ENCODE measurements at regions of chr12 and their contacts with region 1.

Region 1: DNA sequence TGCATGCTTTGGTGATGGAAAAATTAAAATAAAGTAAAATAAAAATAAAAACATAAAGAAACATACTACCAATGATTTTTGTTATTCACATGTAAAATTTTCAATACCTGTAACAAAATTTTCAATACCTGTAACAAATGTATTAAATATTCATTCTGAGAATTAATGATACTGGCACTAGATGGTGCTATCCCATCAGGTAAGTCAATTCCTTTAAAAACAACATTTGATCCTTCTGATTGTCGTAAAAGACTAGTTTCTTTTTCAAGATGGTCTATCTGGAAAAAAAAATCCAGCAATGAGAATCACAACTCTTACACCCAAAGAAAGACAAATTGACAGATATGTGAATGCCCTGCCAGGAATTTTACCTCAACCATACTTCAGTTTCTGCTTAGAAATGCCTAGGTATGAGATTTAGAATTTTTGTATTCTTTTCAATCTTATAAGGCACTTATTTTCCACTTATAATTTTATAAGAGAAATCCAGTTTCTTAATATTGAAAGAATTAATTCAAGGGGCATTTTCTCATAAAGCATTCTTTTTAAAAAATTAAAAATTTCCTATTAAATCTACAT is 30.7 kb downstream of the CEP290 start:
- DNase-seq: peak in 2 of 4 experiments; percentile 12 to 25
- ATAC-seq: no peak
- H3K4me3 ChIP-seq: no peak overlapping the region
- H3K27ac ChIP-seq: no peak overlapping the region
- H3K4me1 ChIP-seq: no peaks in the 10 kb centered on the region
- H3K27me3 ChIP-seq: no peaks in the 10 kb centered on the region
- CTCF ChIP-seq: peak in 2 of 3 experiments; percentile 17 to 57; a peak in 2 of 6 replicates
- EP300 ChIP-seq: no peak
- POLR2A ChIP-seq: no peak
- RAD21 ChIP-seq: peak; percentile 58 to 63

Region 2: DNA sequence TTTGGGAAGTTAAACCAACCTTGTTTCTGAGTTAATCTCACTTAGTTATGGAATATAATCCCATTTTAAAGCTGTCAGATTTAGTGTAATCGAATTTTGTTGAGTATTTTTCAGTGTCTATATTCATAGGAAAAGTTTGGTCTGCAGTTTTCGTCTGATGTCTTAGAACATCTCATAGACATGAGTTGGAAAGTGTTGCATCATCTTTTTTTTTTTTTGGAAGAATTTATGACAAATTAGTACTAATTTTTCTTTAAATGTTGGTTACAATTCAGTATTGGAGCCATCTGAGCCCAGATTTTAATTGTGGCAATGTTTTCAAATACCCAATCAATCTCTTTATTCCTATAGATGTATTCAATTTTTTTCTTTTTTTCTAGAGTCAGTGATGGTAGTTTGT is 109.8 kb before region 1 on chr12:
- CTCF ChIA-PET with region 1: no interaction called
- POLR2A ChIA-PET with region 1: no interaction called
- in situ Hi-C with region 1: no loop called
- intact Hi-C with region 1: no loop called
- DNase-seq: no peak
- ATAC-seq: no peak
- H3K4me3 ChIP-seq: no peak overlapping the region
- H3K27ac ChIP-seq: no peak overlapping the region
- H3K4me1 ChIP-seq: no peaks in the 10 kb centered on the region
- H3K27me3 ChIP-seq: no peaks in the 10 kb centered on the region
- CTCF ChIP-seq: no peak
- EP300 ChIP-seq: no peak
- POLR2A ChIP-seq: no peak
- RAD21 ChIP-seq: no peak

Region 3: GRCh38 chr12:88052686-88053085 is 58.5 kb before region 1 on chr12:
- CTCF ChIA-PET with region 1: no interaction called
- POLR2A ChIA-PET with region 1: no interaction called
- in situ Hi-C with region 1: no loop called
- intact Hi-C with region 1: no loop called
- DNase-seq: peak; percentile 15 to 56 (median 23)
- ATAC-seq: peak; percentile 94
- H3K4me3 ChIP-seq: no peak overlapping the region
- H3K27ac ChIP-seq: no peak overlapping the region
- H3K4me1 ChIP-seq: no peaks in the 10 kb centered on the region
- H3K27me3 ChIP-seq: no peaks in the 10 kb centered on the region
- CTCF ChIP-seq: peak; percentile 47 to 62 (median 55); a peak in 5 of 6 replicates
- EP300 ChIP-seq: no peak
- POLR2A ChIP-seq: no peak
- RAD21 ChIP-seq: peak; percentile 51 to 63

Region 4: GRCh38 chr12:88393017-88393767 is 282.0 kb after region 1 on chr12:
- CTCF ChIA-PET with region 1: no interaction called
- POLR2A ChIA-PET with region 1: no interaction called
- in situ Hi-C with region 1: no loop called
- intact Hi-C with region 1: loop called (anchors 5 kb)
- DNase-seq: peak in 2 of 4 experiments; percentile 10 to 18
- ATAC-seq: peak; percentile 56
- H3K4me3 ChIP-seq: no peak overlapping the region
- H3K27ac ChIP-seq: no peak overlapping the region
- H3K4me1 ChIP-seq: no peaks in the 10 kb centered on the region
- H3K27me3 ChIP-seq: no peaks in the 10 kb centered on the region
- CTCF ChIP-seq: peak; percentile 7 to 26 (median 23); a peak in 1 of 6 replicates
- EP300 ChIP-seq: no peak
- POLR2A ChIP-seq: no peak
- RAD21 ChIP-seq: peak; percentile 23 to 56; a peak in 3 of 4 replicates

Region 5: GRCh38 chr12:88993651-88994050 is 882.5 kb after region 1 on chr12:
- CTCF ChIA-PET with region 1: interaction called, 4 read pairs
- POLR2A ChIA-PET with region 1: no interaction called
- in situ Hi-C with region 1: loop called (anchors 25 kb)
- intact Hi-C with region 1: no loop called
- DNase-seq: peak in 3 of 4 experiments; percentile 5 to 12 (median 9)
- ATAC-seq: no peak
- H3K4me3 ChIP-seq: no peak overlapping the region
- H3K27ac ChIP-seq: no peak overlapping the region
- H3K4me1 ChIP-seq: no peaks in the 10 kb centered on the region
- H3K27me3 ChIP-seq: no peaks in the 10 kb centered on the region
- CTCF ChIP-seq: peak in 1 of 3 experiments; percentile 31; a peak in 1 of 6 replicates
- EP300 ChIP-seq: no peak
- POLR2A ChIP-seq: no peak
- RAD21 ChIP-seq: peak; percentile 85 to 88

Region 6: GRCh38 chr12:89451841-89452251 is 1340.7 kb after region 1 on chr12:
- CTCF ChIA-PET with region 1: no interaction called
- POLR2A ChIA-PET with region 1: no interaction called
- in situ Hi-C with region 1: no loop called
- intact Hi-C with region 1: loop called (anchors 10 kb)
- DNase-seq: no peak
- ATAC-seq: peak; percentile 23; the same call in 1 of the 3 replicates
- H3K4me3 ChIP-seq: no peak overlapping the region
- H3K27ac ChIP-seq: no peak overlapping the region
- H3K4me1 ChIP-seq: peaks cover 0 to 4% of the 10 kb centered on the region in 2 experiments; a peak in 2 of 5 replicates
- H3K27me3 ChIP-seq: no peaks in the 10 kb centered on the region
- CTCF ChIP-seq: no peak
- EP300 ChIP-seq: no peak
- POLR2A ChIP-seq: no peak
- RAD21 ChIP-seq: no peak

Measured in K562 (cell line).